Activated T-helper 1 cell treated with anti-CD3 and anti-CD28 coated beads, Interleukin-12 subunit alpha, Interleukin-12 subunit beta, Interleukin-2, Interleukin-4 antibody, amounts not matched to agents 30 ng/mL and 10 ng/mL and 1 ng/mL, durations not matched to agents 14 hours and 24 hours and 36 hours (primary cell): ENCODE measurements at regions of chr9 and their contacts with region 1.

Region 1: GRCh38 chr9:88476491-88477271 is 58.3 kb upstream of the NXNL2 start:
- DNase-seq: no peak
- H3K4me3 Mint-ChIP-seq: no peak overlapping the region
- H3K27ac Mint-ChIP-seq: peak overlapping the region; percentile 69
- H3K4me1 Mint-ChIP-seq: peaks cover 25% of the 10 kb centered on the region
- H3K27me3 Mint-ChIP-seq: no peaks in the 10 kb centered on the region

Region 2: DNA sequence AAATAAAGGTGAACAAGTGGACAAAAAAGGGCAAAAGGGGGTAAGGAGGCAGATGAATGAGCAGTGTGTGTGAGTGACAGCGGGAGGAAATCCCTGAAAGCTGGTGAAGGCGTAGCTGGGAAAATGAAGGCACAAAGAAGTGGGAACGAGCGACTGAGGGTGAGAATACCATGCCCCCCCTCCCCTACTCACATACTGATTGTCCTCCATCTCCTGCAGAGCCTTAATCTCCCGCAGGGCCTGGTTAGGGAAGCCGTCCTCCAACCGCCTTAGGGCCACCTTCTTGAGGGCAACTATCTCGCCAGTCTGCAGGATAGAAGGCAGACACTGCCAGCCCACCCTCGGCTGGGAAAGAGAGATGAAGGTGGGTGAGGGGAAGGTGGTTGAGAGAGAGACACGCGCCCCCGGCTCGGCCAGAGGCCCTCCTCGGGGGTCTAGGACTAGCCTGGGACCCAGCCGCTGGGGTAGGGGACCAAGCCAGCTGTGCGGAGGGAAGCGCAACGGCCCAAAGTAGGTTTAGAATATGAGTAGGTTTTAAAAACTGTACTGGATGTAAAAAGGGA is 502.9 kb before region 1 on chr9:
- intact Hi-C with region 1: loop called (anchors 5 kb)
- DNase-seq: no peak
- H3K4me3 Mint-ChIP-seq: peak overlapping the region; percentile 93
- H3K27ac Mint-ChIP-seq: peak overlapping the region; percentile 76
- H3K4me1 Mint-ChIP-seq: peaks cover 13% of the 10 kb centered on the region
- H3K27me3 Mint-ChIP-seq: peaks cover 6% of the 10 kb centered on the region

Region 3: DNA sequence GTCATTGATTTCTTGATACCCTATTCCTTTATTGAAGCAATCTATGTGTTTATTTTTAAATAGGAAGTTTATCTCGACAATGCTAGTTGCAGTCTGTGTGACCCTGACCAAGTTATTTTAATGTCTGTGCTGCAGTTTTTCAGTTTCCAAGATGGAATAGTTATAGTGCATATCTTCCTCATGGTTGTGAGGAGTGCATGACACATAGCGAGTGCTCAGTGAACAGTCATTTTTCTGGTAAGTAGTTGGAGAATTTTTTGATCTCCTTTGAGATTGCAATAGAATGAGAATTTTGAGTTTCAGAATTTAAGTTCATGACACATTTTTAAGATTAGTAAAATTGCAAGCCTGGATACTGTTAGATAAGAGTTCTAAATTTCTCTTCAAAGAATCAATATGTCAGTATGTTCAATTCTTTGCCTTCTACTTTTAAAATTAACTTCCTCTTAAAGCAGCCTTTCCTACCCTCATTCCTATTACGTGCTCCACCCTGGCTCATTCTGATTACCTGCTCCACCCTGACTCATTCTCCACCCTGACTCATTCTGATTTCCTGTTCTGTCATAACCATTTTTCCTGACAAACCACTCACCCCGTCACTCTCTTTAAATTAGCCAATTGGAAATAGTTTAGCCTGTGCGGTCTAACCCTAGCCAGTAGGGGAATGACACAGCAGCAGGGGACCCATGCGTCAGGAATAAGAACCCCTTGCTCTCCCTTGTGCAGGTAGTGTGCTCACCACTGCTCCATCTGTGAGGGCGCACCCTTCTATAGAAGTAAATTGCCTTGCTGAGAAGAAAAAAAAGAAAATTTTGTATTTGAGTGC is 57.8 kb before region 1 on chr9:
- intact Hi-C with region 1: loop called (anchors 1 kb)
- DNase-seq: peak; percentile 18
- H3K4me3 Mint-ChIP-seq: no peak overlapping the region
- H3K27ac Mint-ChIP-seq: peak overlapping the region; percentile 78
- H3K4me1 Mint-ChIP-seq: peaks cover 20% of the 10 kb centered on the region
- H3K27me3 Mint-ChIP-seq: no peaks in the 10 kb centered on the region

Region 4: GRCh38 chr9:88433583-88434255 is 43.0 kb before region 1 on chr9:
- intact Hi-C with region 1: loop called (anchors 1 kb)
- DNase-seq: no peak
- H3K4me3 Mint-ChIP-seq: peak overlapping the region; percentile 59
- H3K27ac Mint-ChIP-seq: peak overlapping the region; percentile 78
- H3K4me1 Mint-ChIP-seq: peaks cover 45% of the 10 kb centered on the region
- H3K27me3 Mint-ChIP-seq: no peaks in the 10 kb centered on the region

Region 5: GRCh38 chr9:88460587-88461332 is 15.9 kb before region 1 on chr9:
- intact Hi-C with region 1: loop called (anchors 1 kb)
- DNase-seq: no peak
- H3K4me3 Mint-ChIP-seq: no peak overlapping the region
- H3K27ac Mint-ChIP-seq: peak overlapping the region; percentile 41
- H3K4me1 Mint-ChIP-seq: peaks cover 17% of the 10 kb centered on the region
- H3K27me3 Mint-ChIP-seq: no peaks in the 10 kb centered on the region

Region 6: GRCh38 chr9:88534456-88535261 is 58.0 kb after region 1 on chr9 and contains the start of gene NXNL2:
- intact Hi-C with region 1: loop called (anchors 5 kb)
- DNase-seq: peak; percentile 23
- H3K4me3 Mint-ChIP-seq: peak within 1 kb of the TSS; percentile 30
- H3K27ac Mint-ChIP-seq: no peak within 1 kb of the TSS
- H3K4me1 Mint-ChIP-seq: peaks cover 13% of the 10 kb centered on the region
- H3K27me3 Mint-ChIP-seq: peaks cover 48% of the 10 kb centered on the region
- total RNA-seq, gene NXNL2: not detected in 2 replicates

Region 7: GRCh38 chr9:88801214-88801796 is 324.6 kb after region 1 on chr9:
- intact Hi-C with region 1: no loop called
- DNase-seq: no peak
- H3K4me3 Mint-ChIP-seq: no peak overlapping the region
- H3K27ac Mint-ChIP-seq: no peak overlapping the region
- H3K4me1 Mint-ChIP-seq: no peaks in the 10 kb centered on the region
- H3K27me3 Mint-ChIP-seq: peaks cover 11% of the 10 kb centered on the region